CD4-positive, alpha-beta memory T cell (primary cell): ENCODE measurements at regions of chr14 and their contacts with region 1.

Region 1: DNA sequence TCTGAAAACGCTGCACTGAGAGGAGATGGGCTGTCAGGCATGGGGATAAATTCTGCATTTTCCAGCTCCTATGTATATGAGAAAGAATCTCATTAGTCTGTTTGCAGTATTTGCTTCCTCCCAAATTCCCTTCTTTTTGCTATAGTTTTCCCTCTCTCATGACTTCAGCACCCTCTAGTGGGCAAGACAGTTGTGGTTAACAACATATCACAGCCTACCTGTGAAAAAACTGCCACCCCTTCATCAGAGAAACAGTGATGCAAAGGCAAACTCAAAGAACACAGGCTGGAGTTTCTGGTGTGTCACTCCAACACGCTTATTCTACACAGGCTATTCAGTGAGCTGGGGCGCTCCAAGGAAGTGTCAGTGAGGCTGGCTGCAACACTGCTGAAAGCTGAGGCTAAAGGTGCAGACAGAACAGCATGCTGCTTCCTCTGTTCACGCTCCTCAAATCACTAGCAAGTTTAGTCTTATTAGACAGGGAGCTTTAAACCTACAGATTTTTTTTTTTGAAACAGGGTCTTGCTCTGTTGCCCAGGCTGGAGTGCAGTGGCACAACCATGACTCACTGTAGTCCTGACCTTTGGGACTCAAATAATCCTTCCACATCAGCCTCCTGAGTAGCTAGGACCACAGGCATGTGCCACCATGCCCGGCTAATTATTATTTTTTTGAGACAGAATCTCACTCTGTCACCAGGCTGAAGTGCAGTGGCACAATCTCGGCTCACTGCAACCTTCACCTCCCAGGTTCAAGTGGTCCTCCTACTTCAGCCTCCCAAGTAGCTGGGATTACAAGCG is 19.3 kb downstream of the ZC2HC1C start:
- DNase-seq: peak; percentile 37 to 48 (median 46)
- H3K4me3 ChIP-seq: no peak overlapping the region
- H3K4me3 Mint-ChIP-seq: no peak overlapping the region
- H3K27ac ChIP-seq: no peak overlapping the region
- H3K27ac Mint-ChIP-seq: peak overlapping the region in 1 of 7 donors; percentile 47
- H3K4me1 ChIP-seq: no peaks in the 10 kb centered on the region
- H3K4me1 Mint-ChIP-seq: no peaks in the 10 kb centered on the region
- H3K27me3 ChIP-seq: no peaks in the 10 kb centered on the region
- H3K27me3 Mint-ChIP-seq: no peaks in the 10 kb centered on the region

Region 2: DNA sequence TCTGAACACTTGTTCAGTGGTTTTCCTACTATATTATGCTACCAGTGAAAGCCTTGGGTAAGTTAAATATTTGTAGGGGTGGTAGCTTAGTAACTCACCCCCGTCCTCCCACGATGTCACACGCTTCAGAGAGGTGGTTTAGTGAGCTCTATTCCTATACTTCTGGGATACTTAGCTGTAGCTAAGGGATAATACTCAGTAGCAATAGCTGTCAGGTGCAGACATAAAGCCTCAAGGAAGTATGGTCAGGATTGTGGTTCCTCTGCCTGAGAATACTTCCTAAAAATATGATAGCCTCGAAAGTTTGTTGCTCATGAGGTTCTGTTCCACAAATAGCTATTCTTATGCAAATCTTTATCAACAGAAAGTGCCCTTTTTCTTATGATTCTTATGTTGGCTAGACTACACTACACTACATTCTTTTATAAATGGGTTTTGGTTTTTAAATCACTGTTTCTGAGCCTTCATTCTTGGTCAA is 195.1 kb before region 1 on chr14:
- CTCF ChIA-PET with region 1: interaction called, 14 read pairs
- POLR2A ChIA-PET with region 1: no interaction called
- intact Hi-C with region 1: no loop called
- DNase-seq: no peak
- H3K4me3 ChIP-seq: no peak overlapping the region
- H3K4me3 Mint-ChIP-seq: no peak overlapping the region
- H3K27ac ChIP-seq: no peak overlapping the region
- H3K27ac Mint-ChIP-seq: peak overlapping the region in 4 of 7 donors; percentile 4 to 51 (median 36)
- H3K4me1 ChIP-seq: peaks cover 2% of the 10 kb centered on the region
- H3K4me1 Mint-ChIP-seq: peaks cover 4 to 10% (median 9%) of the 10 kb centered on the region in 4 donors
- H3K27me3 ChIP-seq: no peaks in the 10 kb centered on the region
- H3K27me3 Mint-ChIP-seq: no peaks in the 10 kb centered on the region

Region 3: GRCh38 chr14:74945823-74946682 is 142.7 kb before region 1 on chr14:
- CTCF ChIA-PET with region 1: interaction called, 101 read pairs
- POLR2A ChIA-PET with region 1: no interaction called
- intact Hi-C with region 1: no loop called
- DNase-seq: peak; percentile 62 to 74 (median 63)
- H3K4me3 ChIP-seq: no peak overlapping the region
- H3K4me3 Mint-ChIP-seq: peak overlapping the region in 5 of 8 donors; percentile 22 to 81 (median 63)
- H3K27ac ChIP-seq: no peak overlapping the region
- H3K27ac Mint-ChIP-seq: peak overlapping the region; percentile 21 to 93 (median 70)
- H3K4me1 ChIP-seq: peaks cover 37% of the 10 kb centered on the region
- H3K4me1 Mint-ChIP-seq: peaks cover 13 to 32% (median 30%) of the 10 kb centered on the region in 4 donors
- H3K27me3 ChIP-seq: no peaks in the 10 kb centered on the region
- H3K27me3 Mint-ChIP-seq: peaks cover 0 to 2% of the 10 kb centered on the region in 2 donors

Region 4: GRCh38 chr14:75063407-75064213 is 25.2 kb before region 1 on chr14 and contains the start of gene ACYP1:
- CTCF ChIA-PET with region 1: interaction called, 25 read pairs
- POLR2A ChIA-PET with region 1: no interaction called
- intact Hi-C with region 1: no loop called
- DNase-seq: peak; percentile 85 to 89 (median 87)
- H3K4me3 ChIP-seq: peak within 1 kb of the TSS; percentile 85 to 97
- H3K4me3 Mint-ChIP-seq: peak within 1 kb of the TSS; percentile 96 to 100 (median 99)
- H3K27ac ChIP-seq: peak within 1 kb of the TSS; percentile 76
- H3K27ac Mint-ChIP-seq: peak within 1 kb of the TSS; percentile 92 to 98 (median 97)
- H3K4me1 ChIP-seq: peaks cover 19% of the 10 kb centered on the region
- H3K4me1 Mint-ChIP-seq: peaks cover 16 to 42% (median 24%) of the 10 kb centered on the region in 4 donors
- H3K27me3 ChIP-seq: no peaks in the 10 kb centered on the region
- H3K27me3 Mint-ChIP-seq: no peaks in the 10 kb centered on the region
- total RNA-seq, gene ACYP1: 38.5 to 46.6 TPM

Region 5: DNA sequence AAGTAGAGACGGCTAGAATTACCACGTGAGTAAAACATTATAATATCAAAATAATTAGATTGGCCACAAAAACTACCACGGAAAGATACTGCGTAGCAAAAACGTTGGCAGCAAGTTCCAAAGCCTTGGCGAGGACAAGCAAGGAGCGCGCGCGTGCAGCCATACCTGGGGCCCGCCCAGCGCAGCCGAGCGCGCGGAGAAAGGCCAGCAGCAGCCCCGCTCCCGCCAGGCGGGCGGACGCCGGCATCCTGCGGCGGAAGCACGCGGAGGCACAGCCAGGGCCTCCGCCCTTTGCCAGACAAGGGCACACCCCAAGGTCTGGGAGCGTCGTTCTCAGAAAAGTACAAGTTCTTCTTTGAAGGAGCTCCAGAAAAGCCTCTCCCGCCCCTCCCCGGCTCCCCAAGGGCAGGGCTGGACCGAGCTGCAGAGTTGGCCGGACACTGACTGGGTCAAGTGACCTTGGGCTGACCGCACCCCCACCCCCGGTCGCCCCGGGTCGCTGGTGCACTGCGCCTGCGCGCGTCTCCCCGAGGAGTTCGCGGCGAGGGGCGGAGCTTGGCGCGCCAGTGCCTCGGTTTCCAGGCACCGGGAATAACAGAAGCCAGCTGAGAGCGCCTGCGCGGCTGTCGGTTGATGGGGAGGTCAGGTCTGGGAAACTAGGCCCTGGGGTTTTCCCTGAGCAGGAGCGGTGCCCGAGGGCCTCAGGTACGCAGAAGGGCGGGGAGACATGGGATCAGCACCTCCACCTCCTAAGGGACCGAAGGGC is 19.5 kb before region 1 on chr14 and contains the start of gene ZC2HC1C:
- CTCF ChIA-PET with region 1: interaction called, 25 read pairs
- POLR2A ChIA-PET with region 1: interaction called, 3 read pairs
- intact Hi-C with region 1: no loop called
- DNase-seq: peak; percentile 37 to 51 (median 41)
- H3K4me3 ChIP-seq: peak within 1 kb of the TSS in 1 of 2 donors; percentile 58
- H3K4me3 Mint-ChIP-seq: peak within 1 kb of the TSS in 6 of 8 donors; percentile 22 to 75 (median 71)
- H3K27ac ChIP-seq: peak within 1 kb of the TSS; percentile 32
- H3K27ac Mint-ChIP-seq: peak within 1 kb of the TSS in 6 of 7 donors; percentile 18 to 89 (median 74)
- H3K4me1 ChIP-seq: peaks cover 15% of the 10 kb centered on the region
- H3K4me1 Mint-ChIP-seq: peaks cover 3 to 10% (median 6%) of the 10 kb centered on the region in 4 donors
- H3K27me3 ChIP-seq: no peaks in the 10 kb centered on the region
- H3K27me3 Mint-ChIP-seq: no peaks in the 10 kb centered on the region
- total RNA-seq, gene ZC2HC1C: 0.76 to 0.97 TPM

Region 6: GRCh38 chr14:75101491-75101890 is 12.7 kb after region 1 on chr14:
- CTCF ChIA-PET with region 1: interaction called, 25 read pairs
- POLR2A ChIA-PET with region 1: no interaction called
- intact Hi-C with region 1: no loop called
- DNase-seq: no peak
- H3K4me3 ChIP-seq: no peak overlapping the region
- H3K4me3 Mint-ChIP-seq: no peak overlapping the region
- H3K27ac ChIP-seq: no peak overlapping the region
- H3K27ac Mint-ChIP-seq: peak overlapping the region in 2 of 7 donors; percentile 0 to 53
- H3K4me1 ChIP-seq: no peaks in the 10 kb centered on the region
- H3K4me1 Mint-ChIP-seq: peaks cover 0 to 4% (median 3%) of the 10 kb centered on the region in 4 donors
- H3K27me3 ChIP-seq: no peaks in the 10 kb centered on the region
- H3K27me3 Mint-ChIP-seq: no peaks in the 10 kb centered on the region

Region 7: DNA sequence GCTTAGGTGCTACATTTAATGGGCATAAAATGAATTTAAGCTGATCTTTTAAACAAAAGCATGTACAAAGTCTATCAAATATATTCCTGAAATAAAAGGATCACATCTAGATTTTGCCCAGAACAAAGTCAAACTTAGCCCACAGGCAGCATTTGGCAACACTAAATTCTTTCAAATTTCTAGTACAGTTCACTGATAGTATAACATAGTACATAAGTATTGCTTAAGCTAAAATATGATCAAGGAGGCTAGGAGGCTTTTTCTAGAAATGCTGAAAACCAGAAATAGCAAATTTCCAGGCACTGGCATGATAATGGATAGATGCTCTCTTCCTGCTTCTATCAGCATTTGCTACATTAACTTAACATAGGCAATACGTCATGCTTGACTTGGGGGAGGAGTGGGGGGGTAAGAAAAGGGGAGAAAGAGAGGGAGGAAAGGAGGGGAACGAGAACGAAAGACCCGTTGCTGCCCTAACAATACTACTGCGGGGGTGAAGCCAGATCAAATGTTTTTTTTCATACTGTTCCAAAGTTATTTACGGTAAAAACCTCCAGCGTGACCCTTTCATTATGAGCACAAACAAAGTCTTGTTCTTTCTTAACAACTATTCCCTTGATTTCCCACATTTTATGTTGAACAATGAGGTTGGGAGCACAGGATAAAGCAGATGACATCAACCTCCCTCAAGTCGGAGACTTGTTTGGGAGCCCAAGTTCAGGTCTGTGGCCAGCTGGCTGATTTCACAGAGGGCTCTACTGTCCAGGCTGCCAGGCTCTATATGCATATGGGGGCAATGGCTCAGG is 77.0 kb after region 1 on chr14:
- CTCF ChIA-PET with region 1: no interaction called
- POLR2A ChIA-PET with region 1: no interaction called
- intact Hi-C with region 1: no loop called
- DNase-seq: no peak
- H3K4me3 ChIP-seq: no peak overlapping the region
- H3K4me3 Mint-ChIP-seq: no peak overlapping the region
- H3K27ac ChIP-seq: no peak overlapping the region
- H3K27ac Mint-ChIP-seq: peak overlapping the region in 2 of 7 donors; percentile 42 to 46
- H3K4me1 ChIP-seq: peaks cover 68% of the 10 kb centered on the region
- H3K4me1 Mint-ChIP-seq: peaks cover 51 to 79% (median 67%) of the 10 kb centered on the region in 4 donors
- H3K27me3 ChIP-seq: no peaks in the 10 kb centered on the region
- H3K27me3 Mint-ChIP-seq: no peaks in the 10 kb centered on the region

Region 8: GRCh38 chr14:75176142-75176820 is 87.5 kb after region 1 on chr14 and contains the start of gene TMED10:
- CTCF ChIA-PET with region 1: no interaction called
- POLR2A ChIA-PET with region 1: no interaction called
- intact Hi-C with region 1: no loop called
- DNase-seq: peak; percentile 95 to 96 (median 95)
- H3K4me3 ChIP-seq: peak within 1 kb of the TSS; percentile 78 to 84
- H3K4me3 Mint-ChIP-seq: peak within 1 kb of the TSS; percentile 83 to 97 (median 94)
- H3K27ac ChIP-seq: peak within 1 kb of the TSS; percentile 99
- H3K27ac Mint-ChIP-seq: peak within 1 kb of the TSS; percentile 98 to 99 (median 98)
- H3K4me1 ChIP-seq: peaks cover 38% of the 10 kb centered on the region
- H3K4me1 Mint-ChIP-seq: peaks cover 28 to 57% (median 44%) of the 10 kb centered on the region in 4 donors
- H3K27me3 ChIP-seq: no peaks in the 10 kb centered on the region
- H3K27me3 Mint-ChIP-seq: no peaks in the 10 kb centered on the region
- total RNA-seq, gene TMED10: 202 to 217 TPM

Region 9: GRCh38 chr14:75258615-75259466 is 170.1 kb after region 1 on chr14:
- CTCF ChIA-PET with region 1: no interaction called
- POLR2A ChIA-PET with region 1: no interaction called
- intact Hi-C with region 1: no loop called
- DNase-seq: peak; percentile 99 to 100 (median 100)
- H3K4me3 ChIP-seq: peak overlapping the region; percentile 52 to 54
- H3K4me3 Mint-ChIP-seq: peak overlapping the region; percentile 82 to 90 (median 88)
- H3K27ac ChIP-seq: peak overlapping the region; percentile 95
- H3K27ac Mint-ChIP-seq: peak overlapping the region; percentile 98 to 100 (median 100)
- H3K4me1 ChIP-seq: peaks cover 23% of the 10 kb centered on the region
- H3K4me1 Mint-ChIP-seq: peaks cover 21 to 44% (median 33%) of the 10 kb centered on the region in 4 donors
- H3K27me3 ChIP-seq: no peaks in the 10 kb centered on the region
- H3K27me3 Mint-ChIP-seq: no peaks in the 10 kb centered on the region